ENCODE measurements at regions of chr11 and their contacts with region 1.

Region 1: DNA sequence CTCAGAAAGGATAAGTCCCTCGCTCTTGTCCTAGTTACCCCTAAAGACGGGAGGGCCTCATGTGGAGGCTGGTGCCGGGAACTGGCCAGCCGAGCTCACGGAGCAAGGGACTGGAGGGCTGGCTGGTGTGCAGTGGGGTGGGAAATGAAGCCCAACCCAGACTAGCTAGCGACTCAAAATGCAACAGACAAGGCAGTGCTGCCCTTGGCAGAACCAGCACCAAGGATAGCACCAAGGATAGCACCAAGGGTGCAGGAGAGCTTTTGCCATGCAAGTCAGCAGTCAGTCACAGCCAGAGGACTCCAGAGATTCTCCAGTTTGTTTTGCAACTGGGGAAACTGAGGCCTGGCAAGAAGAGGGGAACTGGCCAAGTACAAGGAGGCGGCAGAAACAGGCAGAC is 6.5 kb upstream of the BATF2 start:
- DNase-seq: no peak
- ATAC-seq: no peak

Region 2: GRCh38 chr11:64935359-64936081 is 67.8 kb before region 1 on chr11 and contains the start of gene GPHA2:
- intact Hi-C with region 1: loop called in 1 of 2 experiments (anchors 10 kb)
- DNase-seq: no peak
- ATAC-seq: peak in 1 of 2 donors; percentile 31
- total RNA-seq, gene GPHA2: not detected

Measured in left cardiac atrium (tissue), 4 donors.